ENCODE measurements at regions of chr19 and their contacts with region 1.

Region 1: DNA sequence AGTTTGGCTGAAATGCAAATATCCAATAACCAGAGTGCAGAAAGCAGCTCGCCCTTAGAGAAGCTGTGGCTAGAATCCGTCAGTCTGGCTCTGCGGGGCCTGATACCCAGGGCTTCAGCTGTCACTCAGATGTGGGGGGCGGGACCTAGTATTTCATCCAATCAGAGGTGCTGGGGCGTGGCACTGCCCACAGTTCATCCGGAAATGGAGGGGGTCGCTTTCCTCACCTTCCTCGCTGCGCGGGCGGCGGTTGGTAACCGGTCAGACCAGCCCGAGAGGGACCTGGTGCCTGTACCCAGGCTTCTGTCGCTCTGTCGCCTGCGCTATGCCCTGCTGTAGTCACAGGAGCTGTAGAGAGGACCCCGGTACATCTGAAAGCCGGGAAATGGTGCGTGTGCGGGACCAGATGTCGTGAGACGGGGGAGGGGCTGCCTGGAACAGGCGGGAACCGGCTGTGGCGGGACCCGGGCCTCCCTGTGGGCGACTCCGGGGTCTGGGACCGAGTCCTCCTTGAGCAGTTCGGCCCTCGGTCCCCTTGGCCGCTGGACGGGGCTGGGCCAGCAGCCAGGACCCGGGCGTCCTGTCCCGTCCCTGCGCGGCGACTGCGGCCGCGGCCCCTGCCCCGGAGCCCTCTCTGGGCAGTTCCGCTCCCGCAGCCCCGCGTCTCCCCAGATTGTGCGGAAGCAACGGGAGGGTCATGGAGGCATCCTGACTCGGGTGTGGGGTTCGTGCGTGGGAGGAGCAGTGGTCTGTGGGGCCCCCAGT is at the start of gene ZNF700:
- DNase-seq: peak; percentile 58
- ATAC-seq: peak; percentile 97
- H3K4me3 ChIP-seq: peak within 1 kb of the TSS; percentile 68 to 74
- H3K27ac ChIP-seq: peak within 1 kb of the TSS; percentile 85
- H3K4me1 ChIP-seq: no peaks in the 10 kb centered on the region
- H3K27me3 ChIP-seq: no peaks in the 10 kb centered on the region
- CTCF ChIP-seq: no peak
- total RNA-seq, gene ZNF700: 10.4 TPM

Region 2: GRCh38 chr19:11421607-11422098 is 503.4 kb before region 1 on chr19:
- CTCF ChIA-PET with region 1: interaction called, 14 read pairs
- POLR2A ChIA-PET with region 1: no interaction called
- in situ Hi-C with region 1: no loop called
- intact Hi-C with region 1: no loop called
- DNase-seq: no peak
- ATAC-seq: no peak
- H3K4me3 ChIP-seq: peak overlapping the region in 1 of 2 experiments; percentile 27; a peak in 1 of 4 replicates
- H3K27ac ChIP-seq: no peak overlapping the region
- H3K4me1 ChIP-seq: no peaks in the 10 kb centered on the region
- H3K27me3 ChIP-seq: no peaks in the 10 kb centered on the region
- CTCF ChIP-seq: no peak

Region 3: DNA sequence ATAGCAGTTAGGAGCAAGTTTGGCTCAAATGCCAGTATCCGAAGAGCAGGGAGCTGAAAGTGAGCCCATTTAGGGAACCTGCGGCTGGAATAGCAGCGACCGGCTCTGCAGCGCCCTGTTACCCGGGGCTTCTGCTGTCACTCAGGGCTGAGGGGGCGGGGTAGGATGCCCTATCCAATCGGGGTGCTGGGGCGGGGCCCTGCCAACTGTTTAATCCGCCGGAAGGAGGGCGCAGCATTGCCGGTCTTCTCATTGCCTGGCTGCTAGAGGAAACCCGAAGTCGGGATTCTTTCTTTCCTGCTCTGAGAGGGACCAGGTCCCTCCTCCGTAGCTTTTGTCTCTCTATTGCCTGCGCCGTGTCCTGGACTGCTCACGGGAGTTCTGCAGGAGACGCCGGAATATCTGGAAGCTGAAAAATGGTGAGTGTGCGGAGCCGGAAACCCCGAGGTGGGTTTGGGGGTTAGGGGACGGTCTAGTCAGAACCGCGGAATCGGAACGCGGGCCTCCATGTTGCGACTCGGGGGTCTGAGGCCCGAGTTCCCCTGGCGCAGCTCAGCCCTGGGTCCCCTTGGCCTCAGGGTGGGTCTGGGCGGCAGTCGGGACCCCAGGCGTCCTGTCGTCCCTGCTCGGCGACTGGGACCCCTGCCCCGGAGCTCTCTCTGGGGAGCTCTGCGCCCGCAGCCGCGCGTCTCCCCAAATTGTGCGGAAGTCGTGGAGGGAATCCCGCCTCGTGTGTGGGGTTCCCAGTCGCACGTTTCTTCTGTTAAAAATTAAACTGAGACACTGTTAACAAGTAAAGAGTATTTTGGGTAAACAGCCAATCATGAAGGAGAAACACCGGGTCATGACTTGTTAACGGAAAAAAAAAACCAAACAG is 62.6 kb after region 1 on chr19:
- CTCF ChIA-PET with region 1: interaction called, 10 read pairs
- POLR2A ChIA-PET with region 1: no interaction called
- in situ Hi-C with region 1: no loop called
- intact Hi-C with region 1: loop called (anchors 10 kb)
- DNase-seq: no peak
- ATAC-seq: peak; percentile 99
- H3K4me3 ChIP-seq: peak overlapping the region; percentile 89 to 90
- H3K27ac ChIP-seq: peak overlapping the region; percentile 87
- H3K4me1 ChIP-seq: no peaks in the 10 kb centered on the region
- H3K27me3 ChIP-seq: no peaks in the 10 kb centered on the region
- CTCF ChIP-seq: no peak

Region 4: DNA sequence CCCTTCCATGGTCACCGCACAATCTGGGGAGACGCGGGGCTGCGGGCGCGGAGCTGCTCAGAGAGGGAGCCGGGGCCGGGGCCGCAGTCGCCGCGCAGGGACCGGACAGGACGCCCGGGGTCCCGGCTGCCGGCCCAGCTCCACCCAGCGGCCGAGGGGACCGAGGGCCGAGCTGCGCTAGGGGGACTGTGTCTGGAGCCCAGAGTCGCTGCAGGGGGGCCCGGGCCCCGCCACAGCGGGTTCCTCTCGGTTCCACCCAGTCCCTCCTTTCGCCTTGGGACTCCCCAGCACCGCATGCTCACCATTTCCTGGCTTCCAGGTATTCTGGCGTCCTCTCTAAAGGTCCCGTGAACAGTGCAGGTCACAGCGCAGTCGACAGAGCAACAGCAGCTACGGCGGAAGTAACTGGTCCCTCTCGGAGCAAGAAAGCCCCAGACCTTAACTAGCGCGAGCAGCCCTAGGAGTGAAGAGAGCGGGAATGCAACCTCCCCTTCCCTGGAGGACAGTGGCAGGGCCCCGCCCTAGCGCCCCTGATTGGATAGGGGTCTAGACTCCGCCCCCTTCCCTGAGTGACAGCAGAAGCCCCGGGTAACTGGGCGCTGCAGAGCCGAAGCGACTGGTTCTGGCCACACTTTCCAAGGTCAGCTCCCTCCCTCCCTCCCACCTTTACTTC is 127.6 kb after region 1 on chr19 and contains the start of gene ZNF878:
- CTCF ChIA-PET with region 1: interaction called, 12 read pairs
- POLR2A ChIA-PET with region 1: no interaction called
- in situ Hi-C with region 1: no loop called
- intact Hi-C with region 1: no loop called
- DNase-seq: no peak
- ATAC-seq: peak; percentile 100
- H3K4me3 ChIP-seq: peak within 1 kb of the TSS; percentile 70 to 83
- H3K27ac ChIP-seq: peak within 1 kb of the TSS; percentile 78
- H3K4me1 ChIP-seq: peaks cover 3% of the 10 kb centered on the region; the same call in 1 of the 2 replicates
- H3K27me3 ChIP-seq: no peaks in the 10 kb centered on the region
- CTCF ChIP-seq: peak; percentile 38; the same call in 1 of the 2 replicates
- total RNA-seq, gene ZNF878: 2.1 TPM

Measured in Panc1 (cell line).